Heart right ventricle (tissue), 16 donors: ENCODE measurements at regions of chr2 and their contacts with region 1.

Region 1: DNA sequence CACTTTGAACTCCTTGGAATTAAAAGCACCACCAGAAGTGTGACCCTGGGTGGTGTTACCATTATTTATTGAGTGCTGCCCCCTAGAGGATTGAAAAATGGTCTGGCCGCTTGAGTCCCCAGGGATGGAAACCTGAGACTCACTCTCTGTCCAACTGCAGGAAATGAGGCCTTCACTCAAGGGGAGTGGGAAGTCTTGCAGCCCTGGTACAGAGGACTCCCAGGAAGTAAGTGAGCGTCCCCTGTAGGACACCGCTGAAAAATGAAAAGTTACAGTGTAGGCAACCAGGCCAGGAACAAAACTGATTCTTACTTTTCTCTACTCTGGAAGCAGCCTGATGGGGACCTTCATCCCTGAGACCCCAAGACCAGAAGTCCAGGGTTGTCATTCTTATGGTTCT is 2.2 kb upstream of the NRP2 start:
- DNase-seq: peak in 1 of 2 donors; percentile 74
- ATAC-seq: peak in 7 of 8 donors; percentile 19 to 41 (median 21)
- H3K4me3 ChIP-seq: no peak overlapping the region
- H3K27ac ChIP-seq: no peak overlapping the region
- H3K4me1 ChIP-seq: peaks cover 4 to 40% (median 24%) of the 10 kb centered on the region in 9 donors
- H3K27me3 ChIP-seq: peaks cover 0 to 47% (median 19%) of the 10 kb centered on the region in 7 donors
- CTCF ChIP-seq: peak; percentile 42 to 79 (median 69)

Region 2: DNA sequence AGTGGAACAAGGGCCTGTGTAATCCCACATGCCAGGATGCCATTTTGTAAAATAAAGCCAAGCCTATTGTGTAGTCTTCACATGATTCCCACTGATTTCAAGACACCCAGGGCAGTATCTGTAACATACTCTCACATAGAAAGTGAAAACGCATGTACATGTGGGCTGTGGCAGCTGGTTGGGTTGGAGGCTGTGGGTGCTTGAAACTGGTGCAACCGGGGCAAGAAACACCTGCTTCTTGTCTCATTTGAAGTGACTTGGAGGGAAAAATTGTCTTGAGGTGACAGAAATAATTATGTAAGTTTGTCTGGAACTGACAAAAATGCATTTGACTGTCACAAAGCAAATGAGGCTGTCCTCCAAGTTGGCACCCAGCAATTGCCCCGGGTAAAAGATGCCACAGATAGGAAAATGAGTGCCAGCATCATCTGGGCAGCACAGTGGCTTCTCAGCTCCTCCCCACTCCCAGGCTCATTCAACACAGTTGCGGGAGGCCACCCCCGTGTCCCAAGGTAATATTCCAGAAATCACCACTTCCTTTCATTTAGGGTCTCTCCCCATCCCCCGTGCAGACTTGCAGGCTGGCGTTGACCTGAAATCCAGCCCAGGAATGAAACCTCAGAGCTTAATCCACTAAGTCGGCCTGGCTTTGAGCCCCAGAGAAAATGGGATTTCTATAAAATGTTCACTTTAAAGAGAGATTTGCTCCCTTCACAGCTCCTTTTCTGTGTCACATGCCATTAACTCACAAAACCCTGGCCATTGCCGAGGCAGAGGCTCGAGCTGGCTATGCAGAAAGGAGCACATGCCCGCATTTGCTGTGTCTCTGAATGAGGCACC is 1428.7 kb before region 1 on chr2:
- intact Hi-C with region 1: loop called in 1 of 10 experiments (anchors 10 kb)
- DNase-seq: no peak
- ATAC-seq: no peak
- H3K4me3 ChIP-seq: no peak overlapping the region
- H3K27ac ChIP-seq: no peak overlapping the region
- H3K4me1 ChIP-seq: peaks cover 0 to 9% (median 0%) of the 10 kb centered on the region in 9 donors
- H3K27me3 ChIP-seq: peaks cover 0 to 3% (median 0%) of the 10 kb centered on the region in 7 donors
- CTCF ChIP-seq: no peak

Region 3: GRCh38 chr2:204260162-204260877 is 1419.7 kb before region 1 on chr2:
- intact Hi-C with region 1: loop called in 6 of 10 experiments (anchors 5 to 10 kb)
- DNase-seq: peak; percentile 15 to 76
- ATAC-seq: peak; percentile 59 to 87 (median 74)
- H3K4me3 ChIP-seq: no peak overlapping the region
- H3K27ac ChIP-seq: peak overlapping the region in 4 of 10 donors; percentile 13 to 41 (median 32)
- H3K4me1 ChIP-seq: peaks cover 0 to 34% (median 15%) of the 10 kb centered on the region in 9 donors
- H3K27me3 ChIP-seq: peaks cover 0 to 4% (median 0%) of the 10 kb centered on the region in 7 donors
- CTCF ChIP-seq: peak; percentile 67 to 84 (median 81)

Region 4: DNA sequence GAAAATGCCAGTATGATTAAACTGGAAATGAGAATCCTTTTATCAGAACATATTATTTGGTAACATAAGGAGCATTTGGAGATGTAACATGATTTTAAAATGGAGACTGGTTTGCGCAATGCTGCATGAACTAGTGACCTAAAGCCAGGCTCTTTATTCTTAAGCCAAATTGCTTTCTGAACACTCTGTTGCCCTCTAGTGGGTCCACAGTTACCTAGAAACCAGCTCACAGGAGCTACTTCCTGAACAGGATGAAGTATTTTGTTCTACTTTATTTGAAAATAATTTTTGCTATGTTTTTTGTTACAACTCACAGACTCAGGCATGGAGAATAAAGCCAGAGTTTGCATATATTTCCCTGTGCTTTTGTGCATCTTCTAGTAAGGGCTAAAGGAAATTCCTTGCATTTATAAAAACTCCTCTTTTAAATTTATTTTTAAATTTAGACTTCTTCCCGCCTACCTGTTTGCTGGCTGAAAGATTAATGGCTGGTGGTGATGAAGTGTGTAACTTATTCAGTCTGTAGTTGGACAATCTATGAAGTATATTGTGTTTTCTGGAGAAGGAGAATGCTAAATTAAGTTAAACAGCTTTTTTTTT is 988.1 kb before region 1 on chr2:
- intact Hi-C with region 1: loop called in 4 of 10 experiments (anchors 10 kb)
- DNase-seq: peak in 1 of 2 donors; percentile 67
- ATAC-seq: peak in 7 of 8 donors; percentile 75 to 90 (median 85)
- H3K4me3 ChIP-seq: no peak overlapping the region
- H3K27ac ChIP-seq: peak overlapping the region in 1 of 10 donors; percentile 37
- H3K4me1 ChIP-seq: peaks cover 0 to 14% (median 3%) of the 10 kb centered on the region in 9 donors
- H3K27me3 ChIP-seq: no peaks in the 10 kb centered on the region
- CTCF ChIP-seq: peak; percentile 48 to 90 (median 76)

Region 5: DNA sequence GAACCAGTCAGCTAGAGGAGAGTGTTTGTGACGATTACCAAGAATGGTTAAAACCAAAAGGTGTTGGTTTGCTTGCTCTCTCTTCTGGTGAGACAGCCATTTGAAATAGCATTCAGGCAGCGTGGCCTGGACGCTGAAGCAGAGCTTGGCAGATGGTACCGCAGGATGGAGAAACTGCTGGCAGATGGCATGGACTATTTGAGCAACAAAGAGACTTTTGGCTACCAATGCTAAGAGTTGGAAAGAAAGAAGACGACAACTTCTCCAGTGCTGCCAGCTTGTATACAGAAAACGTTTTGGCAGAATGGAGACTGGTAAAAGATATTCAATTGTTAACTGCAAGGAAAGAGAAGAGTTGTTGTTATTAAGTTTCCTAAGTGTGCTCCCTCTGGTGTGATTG is 819.8 kb before region 1 on chr2:
- intact Hi-C with region 1: loop called in 3 of 10 experiments (anchors 10 kb)
- DNase-seq: no peak
- ATAC-seq: peak in 1 of 8 donors; percentile 63
- H3K4me3 ChIP-seq: no peak overlapping the region
- H3K27ac ChIP-seq: no peak overlapping the region
- H3K4me1 ChIP-seq: no peaks in the 10 kb centered on the region
- H3K27me3 ChIP-seq: no peaks in the 10 kb centered on the region
- CTCF ChIP-seq: no peak

Region 6: DNA sequence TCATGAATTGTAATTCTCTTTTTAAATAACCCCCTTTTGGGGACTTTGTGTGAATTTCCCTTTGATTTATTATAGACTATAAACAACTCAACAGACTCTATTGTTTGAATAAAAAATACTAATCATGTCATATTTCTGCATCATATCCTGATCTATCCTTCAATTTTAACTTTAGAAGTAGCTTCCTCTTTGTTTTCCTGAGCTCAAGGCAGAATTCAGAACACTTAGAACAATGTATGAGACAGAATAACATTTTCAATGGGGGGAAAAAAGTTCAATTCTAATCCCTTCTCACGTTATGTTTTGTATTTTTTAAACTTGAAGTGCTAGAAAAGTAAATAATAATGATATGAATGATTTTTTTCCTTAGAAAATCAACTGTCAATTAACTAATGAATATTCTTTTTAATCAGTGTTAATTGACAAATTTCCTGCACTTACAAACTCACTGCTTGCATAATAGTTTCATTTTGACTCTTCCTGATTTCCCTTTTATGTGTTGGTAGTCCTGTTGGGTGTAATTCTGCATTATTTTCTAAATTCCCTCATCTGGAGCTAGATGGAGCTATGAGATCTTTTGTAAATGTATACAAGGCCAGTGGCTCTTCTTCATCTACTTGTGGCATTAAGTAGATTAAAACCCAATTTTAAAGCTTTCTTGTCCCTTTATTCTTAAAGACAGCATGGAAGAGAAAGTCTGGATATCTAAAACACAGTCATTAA is 808.7 kb before region 1 on chr2:
- intact Hi-C with region 1: loop called in 7 of 10 experiments (anchors 2 to 10 kb)
- DNase-seq: no peak
- ATAC-seq: peak in 5 of 8 donors; percentile 35 to 58 (median 42)
- H3K4me3 ChIP-seq: no peak overlapping the region
- H3K27ac ChIP-seq: peak overlapping the region in 3 of 10 donors; percentile 2 to 41 (median 25)
- H3K4me1 ChIP-seq: peaks cover 0 to 26% (median 18%) of the 10 kb centered on the region in 9 donors
- H3K27me3 ChIP-seq: no peaks in the 10 kb centered on the region
- CTCF ChIP-seq: peak in 8 of 9 donors; percentile 7 to 63 (median 46)

Region 7: GRCh38 chr2:204885747-204886146 is 794.3 kb before region 1 on chr2:
- intact Hi-C with region 1: loop called in 1 of 10 experiments (anchors 10 kb)
- DNase-seq: no peak
- ATAC-seq: no peak
- H3K4me3 ChIP-seq: no peak overlapping the region
- H3K27ac ChIP-seq: no peak overlapping the region
- H3K4me1 ChIP-seq: no peaks in the 10 kb centered on the region
- H3K27me3 ChIP-seq: no peaks in the 10 kb centered on the region
- CTCF ChIP-seq: no peak

Region 8: GRCh38 chr2:205629027-205629817 is 50.8 kb before region 1 on chr2:
- intact Hi-C with region 1: no loop called
- DNase-seq: no peak
- ATAC-seq: no peak
- H3K4me3 ChIP-seq: no peak overlapping the region
- H3K27ac ChIP-seq: no peak overlapping the region
- H3K4me1 ChIP-seq: no peaks in the 10 kb centered on the region
- H3K27me3 ChIP-seq: no peaks in the 10 kb centered on the region
- CTCF ChIP-seq: no peak